ENCODE measurements at regions of chr14 and their contacts with region 1.

Region 1: DNA sequence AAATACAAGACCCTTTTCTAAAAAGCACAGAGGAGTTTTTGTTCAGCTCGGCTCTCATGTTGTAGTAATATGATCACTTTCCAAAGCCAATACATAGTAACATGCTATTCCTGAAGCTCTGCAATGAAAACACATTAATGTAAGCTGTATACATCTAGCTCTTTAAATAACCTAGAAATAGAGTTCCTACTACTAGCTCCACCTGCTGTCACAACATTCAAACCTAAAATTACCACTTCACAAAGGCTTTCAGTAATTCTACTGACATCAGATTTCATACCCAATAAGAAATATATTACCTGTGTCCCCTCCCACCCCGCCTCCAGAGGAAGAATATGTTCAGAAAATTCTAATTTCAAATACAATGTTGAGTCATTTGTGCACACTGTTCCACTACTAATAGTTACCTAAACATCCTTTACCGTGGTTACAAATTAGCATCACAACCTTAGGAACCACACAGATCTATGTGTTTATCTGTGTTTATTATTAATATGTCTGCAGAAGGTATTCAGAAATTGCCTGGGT is 17.8 kb downstream of the EFCAB11 start:
- DNase-seq: no peak
- ATAC-seq: no peak
- H3K4me3 ChIP-seq: no peak overlapping the region
- H3K4me3 Mint-ChIP-seq: no peak overlapping the region
- H3K27ac ChIP-seq: no peak overlapping the region
- H3K27ac Mint-ChIP-seq: no peak overlapping the region
- H3K4me1 ChIP-seq: no peaks in the 10 kb centered on the region
- H3K4me1 Mint-ChIP-seq: no peaks in the 10 kb centered on the region
- H3K27me3 ChIP-seq: no peaks in the 10 kb centered on the region
- H3K27me3 Mint-ChIP-seq: no peaks in the 10 kb centered on the region

Region 2: DNA sequence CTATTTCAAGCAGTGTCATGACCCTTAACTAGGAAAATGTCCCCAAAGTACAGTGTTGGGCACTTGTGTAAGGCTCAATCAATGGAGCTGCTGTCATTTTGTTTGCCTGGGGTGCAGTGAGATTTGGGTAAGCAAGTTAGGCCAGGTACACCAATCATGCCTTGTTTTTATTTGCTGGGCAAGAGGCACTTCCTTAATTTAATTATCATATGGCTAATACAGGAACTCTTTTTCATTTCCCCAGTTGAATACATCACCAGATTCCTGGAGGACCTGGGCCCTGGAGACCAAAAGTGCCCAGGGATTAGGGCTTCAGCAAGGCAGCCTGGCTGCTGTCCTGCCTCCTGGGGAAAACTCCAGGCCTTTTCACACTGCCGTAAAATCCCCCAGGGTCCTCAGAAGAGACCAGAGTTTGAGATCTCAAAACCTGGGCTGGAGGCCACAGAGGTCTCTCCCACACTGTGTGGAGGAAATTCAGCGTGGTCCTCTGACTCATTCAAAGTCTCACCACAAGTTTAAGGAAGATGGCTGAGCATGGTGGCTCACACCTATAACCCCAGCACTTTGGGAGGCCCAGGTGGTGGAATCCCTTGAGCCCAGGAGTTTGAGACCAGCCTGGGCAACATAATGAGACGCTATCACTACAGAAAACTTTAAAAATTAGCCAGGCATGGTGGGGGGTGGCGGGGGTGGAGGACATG is 491.3 kb before region 1 on chr14:
- CTCF ChIA-PET with region 1: no interaction called
- POLR2A ChIA-PET with region 1: no interaction called
- DNase-seq: peak in 2 of 35 experiments; percentile 5 to 17
- ATAC-seq: peak in 2 of 4 experiments; percentile 59 to 62
- H3K4me3 ChIP-seq: no peak overlapping the region
- H3K4me3 Mint-ChIP-seq: peak overlapping the region in 1 of 3 donors; percentile 13
- H3K27ac ChIP-seq: no peak overlapping the region
- H3K27ac Mint-ChIP-seq: peak overlapping the region; percentile 73 to 84
- H3K4me1 ChIP-seq: peaks cover 32 to 47% of the 10 kb centered on the region in 2 experiments
- H3K4me1 Mint-ChIP-seq: peaks cover 76 to 85% (median 79%) of the 10 kb centered on the region in 3 donors
- H3K27me3 ChIP-seq: no peaks in the 10 kb centered on the region
- H3K27me3 Mint-ChIP-seq: no peaks in the 10 kb centered on the region

Region 3: GRCh38 chr14:89912667-89913211 is 24.0 kb before region 1 on chr14:
- CTCF ChIA-PET with region 1: no interaction called
- POLR2A ChIA-PET with region 1: no interaction called
- DNase-seq: no peak
- ATAC-seq: no peak
- H3K4me3 ChIP-seq: no peak overlapping the region
- H3K4me3 Mint-ChIP-seq: no peak overlapping the region
- H3K27ac ChIP-seq: no peak overlapping the region
- H3K27ac Mint-ChIP-seq: no peak overlapping the region
- H3K4me1 ChIP-seq: peaks cover 0 to 2% of the 10 kb centered on the region in 2 experiments
- H3K4me1 Mint-ChIP-seq: peaks cover 0 to 3% (median 3%) of the 10 kb centered on the region in 3 donors
- H3K27me3 ChIP-seq: no peaks in the 10 kb centered on the region
- H3K27me3 Mint-ChIP-seq: peaks cover 4 to 20% of the 10 kb centered on the region in 2 donors

Region 4: GRCh38 chr14:89973234-89973823 is 36.6 kb after region 1 on chr14:
- CTCF ChIA-PET with region 1: interaction called, 8 to 15 read pairs
- POLR2A ChIA-PET with region 1: no interaction called
- DNase-seq: peak in 30 of 35 experiments; percentile 3 to 64 (median 32)
- ATAC-seq: peak in 2 of 4 experiments; percentile 32 to 68
- H3K4me3 ChIP-seq: no peak overlapping the region
- H3K4me3 Mint-ChIP-seq: no peak overlapping the region
- H3K27ac ChIP-seq: no peak overlapping the region
- H3K27ac Mint-ChIP-seq: peak overlapping the region in 1 of 2 donors; percentile 22
- H3K4me1 ChIP-seq: no peaks in the 10 kb centered on the region
- H3K4me1 Mint-ChIP-seq: peaks cover 0 to 6% (median 1%) of the 10 kb centered on the region in 3 donors
- H3K27me3 ChIP-seq: no peaks in the 10 kb centered on the region
- H3K27me3 Mint-ChIP-seq: no peaks in the 10 kb centered on the region

Region 5: DNA sequence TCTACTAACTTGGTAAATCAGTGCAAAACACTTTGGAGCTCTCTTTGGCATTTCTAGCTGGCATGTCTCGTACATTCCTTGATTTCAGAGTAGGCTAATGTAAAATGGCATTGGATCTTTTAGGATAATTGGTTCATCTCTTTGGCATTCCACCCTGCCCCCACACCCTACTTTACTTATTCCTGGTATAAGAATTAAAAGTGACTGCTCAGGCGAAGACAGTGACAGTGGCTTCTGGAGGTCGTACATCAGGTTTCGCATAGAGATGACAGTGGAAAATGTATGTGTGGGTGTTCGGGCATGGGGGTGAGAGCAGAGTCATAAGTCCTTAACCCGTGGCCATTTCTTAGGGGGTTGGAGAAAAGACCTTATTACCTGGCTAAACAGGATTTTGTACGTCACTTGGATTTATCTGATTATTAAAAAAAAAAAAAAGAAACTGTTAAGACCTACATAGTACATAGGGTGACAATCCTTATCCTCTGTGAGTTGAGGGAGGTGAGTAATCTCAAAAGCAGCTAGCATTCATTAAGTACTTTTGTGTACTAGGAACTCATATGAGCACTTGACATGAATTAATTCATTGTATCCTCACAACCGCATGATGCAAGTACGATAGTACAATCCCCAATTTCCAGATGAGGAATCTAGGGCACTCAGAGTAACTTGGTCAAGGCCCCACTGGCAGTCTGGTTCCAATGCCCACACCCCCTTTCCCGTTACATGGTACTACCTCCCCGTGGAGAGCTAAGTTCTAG is 102.7 kb after region 1 on chr14:
- CTCF ChIA-PET with region 1: no interaction called
- POLR2A ChIA-PET with region 1: interaction called in 1 of 2 experiments, 12 read pairs
- DNase-seq: no peak
- ATAC-seq: no peak
- H3K4me3 ChIP-seq: no peak overlapping the region
- H3K4me3 Mint-ChIP-seq: no peak overlapping the region
- H3K27ac ChIP-seq: no peak overlapping the region
- H3K27ac Mint-ChIP-seq: no peak overlapping the region
- H3K4me1 ChIP-seq: no peaks in the 10 kb centered on the region
- H3K4me1 Mint-ChIP-seq: no peaks in the 10 kb centered on the region
- H3K27me3 ChIP-seq: no peaks in the 10 kb centered on the region
- H3K27me3 Mint-ChIP-seq: no peaks in the 10 kb centered on the region

Region 6: DNA sequence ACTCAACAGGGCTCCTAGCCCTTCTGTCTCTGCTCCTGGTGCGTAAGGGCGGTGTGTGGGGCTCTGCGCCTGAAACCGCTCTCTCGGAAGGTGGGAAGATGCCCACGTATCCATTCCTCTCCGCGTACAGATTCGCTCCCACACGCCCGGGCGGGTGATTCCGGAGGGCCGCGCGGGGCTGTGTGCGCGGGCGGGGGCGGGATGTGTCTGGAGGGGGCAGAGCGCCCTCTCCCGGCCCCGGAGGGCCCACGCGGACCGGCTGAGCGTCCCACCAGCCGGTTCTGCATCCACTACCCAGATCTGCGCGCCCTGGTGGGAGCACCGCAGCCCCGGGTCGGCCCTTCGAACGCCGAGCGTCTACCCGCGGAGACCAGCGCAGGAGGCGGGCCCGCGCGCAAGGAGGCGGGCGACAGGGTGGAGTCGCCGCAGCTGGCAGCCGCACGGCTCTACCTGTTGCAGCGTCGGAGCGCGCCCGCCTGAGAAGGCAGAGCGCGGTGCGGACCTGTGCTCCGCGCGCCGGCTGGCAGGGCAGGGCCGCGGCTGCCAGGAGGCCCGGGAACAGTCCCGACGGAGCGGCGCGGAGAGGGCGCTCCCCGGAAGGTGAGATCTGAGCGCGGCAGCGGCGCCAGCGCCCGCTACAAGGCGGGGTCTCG is 123.7 kb after region 1 on chr14:
- CTCF ChIA-PET with region 1: no interaction called
- POLR2A ChIA-PET with region 1: no interaction called
- DNase-seq: peak in 17 of 35 experiments; percentile 3 to 40 (median 20)
- ATAC-seq: peak; percentile 68 to 82 (median 72)
- H3K4me3 ChIP-seq: peak overlapping the region; percentile 35 to 68
- H3K4me3 Mint-ChIP-seq: peak overlapping the region; percentile 58 to 89 (median 60)
- H3K27ac ChIP-seq: no peak overlapping the region
- H3K27ac Mint-ChIP-seq: no peak overlapping the region
- H3K4me1 ChIP-seq: peaks cover 6 to 22% of the 10 kb centered on the region in 2 experiments
- H3K4me1 Mint-ChIP-seq: peaks cover 27 to 29% (median 28%) of the 10 kb centered on the region in 3 donors
- H3K27me3 ChIP-seq: peaks cover 8 to 42% of the 10 kb centered on the region in 2 experiments
- H3K27me3 Mint-ChIP-seq: peaks cover 57 to 72% of the 10 kb centered on the region in 2 donors

Region 7: GRCh38 chr14:90235179-90235976 is 298.7 kb after region 1 on chr14:
- CTCF ChIA-PET with region 1: interaction called in 1 of 2 experiments, 11 read pairs
- POLR2A ChIA-PET with region 1: no interaction called
- DNase-seq: peak in 32 of 35 experiments; percentile 8 to 68 (median 46)
- ATAC-seq: peak; percentile 52 to 70 (median 62)
- H3K4me3 ChIP-seq: no peak overlapping the region
- H3K4me3 Mint-ChIP-seq: no peak overlapping the region
- H3K27ac ChIP-seq: no peak overlapping the region
- H3K27ac Mint-ChIP-seq: no peak overlapping the region
- H3K4me1 ChIP-seq: peaks cover 0 to 4% of the 10 kb centered on the region in 2 experiments
- H3K4me1 Mint-ChIP-seq: peaks cover 0 to 10% (median 2%) of the 10 kb centered on the region in 3 donors
- H3K27me3 ChIP-seq: peaks cover 0 to 29% of the 10 kb centered on the region in 2 experiments
- H3K27me3 Mint-ChIP-seq: peaks cover 20 to 22% of the 10 kb centered on the region in 2 donors